IMR-90 (cell line): ENCODE measurements at regions of chr10 and their contacts with region 1.

Region 1: DNA sequence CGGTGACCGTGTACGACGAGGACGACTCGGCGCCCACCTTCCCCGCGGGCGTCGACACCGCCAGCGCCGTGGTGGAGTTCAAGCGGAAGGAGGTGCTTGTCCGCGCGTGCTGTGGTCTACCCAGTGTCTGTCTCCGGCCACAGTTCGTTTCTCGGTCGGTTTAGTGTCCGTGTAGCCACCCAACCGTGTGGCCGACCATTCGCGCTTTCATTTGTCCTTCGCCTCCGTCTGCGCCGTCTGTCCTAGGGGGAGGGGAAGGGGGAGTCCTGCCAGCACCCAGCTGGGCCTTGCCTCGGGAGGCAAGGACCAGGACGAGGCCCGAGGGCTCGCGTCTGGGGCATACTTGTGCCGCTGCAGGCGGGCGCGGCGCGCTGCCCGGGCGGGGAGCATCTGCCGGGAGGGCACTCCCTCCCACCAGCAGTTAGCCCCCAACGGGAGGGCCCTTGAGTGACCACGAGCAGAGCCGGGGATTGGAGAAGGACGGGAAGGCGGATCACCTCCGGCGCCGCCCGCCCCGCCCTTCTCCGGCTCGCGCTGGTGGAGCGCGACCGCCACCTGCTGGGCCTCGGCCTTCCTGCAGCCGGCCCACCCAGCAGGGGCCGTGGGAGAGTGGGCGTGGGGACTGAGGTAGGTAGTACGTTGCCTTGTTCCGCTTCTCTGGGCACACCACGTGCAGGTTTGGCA is 28.4 kb downstream of the RET start:
- DNase-seq: peak; percentile 63
- ATAC-seq: peak; percentile 98
- H3K4me3 ChIP-seq: peak overlapping the region; percentile 46
- H3K27ac ChIP-seq: no peak overlapping the region
- H3K4me1 ChIP-seq: peaks cover 3% of the 10 kb centered on the region; the same call in 1 of the 2 replicates
- H3K27me3 ChIP-seq: peaks cover 27% of the 10 kb centered on the region
- CTCF ChIP-seq: peak; percentile 98
- POLR2A ChIP-seq: peak; percentile 51; the same call in 1 of the 2 replicates
- RAD21 ChIP-seq: peak; percentile 96

Region 2: GRCh38 chr10:42753126-42753506 is 352.1 kb before region 1 on chr10:
- CTCF ChIA-PET with region 1: no interaction called
- POLR2A ChIA-PET with region 1: no interaction called
- dilution Hi-C with region 1: no loop called
- in situ Hi-C with region 1: no loop called
- intact Hi-C with region 1: loop called (anchors 1 kb)
- DNase-seq: peak; percentile 55
- ATAC-seq: peak; percentile 95
- H3K4me3 ChIP-seq: peak overlapping the region; percentile 38
- H3K27ac ChIP-seq: no peak overlapping the region
- H3K4me1 ChIP-seq: no peaks in the 10 kb centered on the region
- H3K27me3 ChIP-seq: peaks cover 34% of the 10 kb centered on the region
- CTCF ChIP-seq: peak; percentile 74
- POLR2A ChIP-seq: no peak
- RAD21 ChIP-seq: peak; percentile 55

Region 3: DNA sequence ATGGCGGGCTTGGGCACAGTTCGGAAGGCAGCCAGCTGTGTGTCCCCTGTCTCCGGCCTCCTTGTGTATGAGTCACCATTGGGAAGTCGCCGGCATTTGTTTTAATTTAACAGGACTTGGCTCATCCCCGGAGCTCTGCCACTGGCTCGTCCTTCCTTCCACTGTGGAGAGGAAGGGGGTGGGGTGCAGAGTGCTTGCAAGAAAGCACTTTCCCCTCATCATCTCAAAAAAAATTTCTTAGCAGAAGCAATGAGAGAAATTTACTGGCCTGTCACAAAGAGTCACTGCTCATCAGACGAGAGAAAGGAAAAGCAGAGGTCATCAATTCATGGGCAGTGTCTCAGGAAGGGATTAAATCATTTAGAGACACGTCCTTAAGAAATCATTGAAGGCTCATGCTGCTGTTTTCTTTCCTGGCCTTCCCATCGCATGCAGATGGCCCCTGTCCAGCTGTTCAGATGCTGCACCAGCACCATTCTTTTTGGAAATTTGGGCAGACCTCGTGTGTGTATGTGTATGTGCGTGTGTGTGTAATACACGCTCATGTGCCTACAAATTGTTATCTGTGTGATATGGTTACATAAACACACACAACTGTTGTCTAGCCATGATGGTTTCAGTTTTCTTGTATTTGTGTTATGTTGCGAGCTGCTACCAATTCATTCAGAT is 229.3 kb before region 1 on chr10:
- CTCF ChIA-PET with region 1: no interaction called
- POLR2A ChIA-PET with region 1: no interaction called
- dilution Hi-C with region 1: no loop called
- in situ Hi-C with region 1: loop called (anchors 10 kb)
- intact Hi-C with region 1: no loop called
- DNase-seq: peak; percentile 10
- ATAC-seq: peak; percentile 79
- H3K4me3 ChIP-seq: no peak overlapping the region
- H3K27ac ChIP-seq: no peak overlapping the region
- H3K4me1 ChIP-seq: no peaks in the 10 kb centered on the region
- H3K27me3 ChIP-seq: peaks cover 2% of the 10 kb centered on the region; the same call in 1 of the 2 replicates
- CTCF ChIP-seq: no peak
- POLR2A ChIP-seq: no peak
- RAD21 ChIP-seq: no peak

Region 4: GRCh38 chr10:43407576-43408330 is 302.5 kb after region 1 on chr10:
- CTCF ChIA-PET with region 1: no interaction called
- POLR2A ChIA-PET with region 1: no interaction called
- dilution Hi-C with region 1: no loop called
- in situ Hi-C with region 1: no loop called
- intact Hi-C with region 1: no loop called
- DNase-seq: peak; percentile 89
- ATAC-seq: peak; percentile 36
- H3K4me3 ChIP-seq: peak overlapping the region; percentile 82
- H3K27ac ChIP-seq: peak overlapping the region; percentile 96
- H3K4me1 ChIP-seq: peaks cover 2% of the 10 kb centered on the region; the same call in 1 of the 2 replicates
- H3K27me3 ChIP-seq: no peaks in the 10 kb centered on the region
- CTCF ChIP-seq: peak; percentile 43
- POLR2A ChIP-seq: peak; percentile 94
- RAD21 ChIP-seq: no peak